Thyroid gland (tissue), 4 donors: ENCODE measurements at regions of chr3 and their contacts with region 1.

Region 1: GRCh38 chr3:24237971-24238767 is 256.5 kb downstream of the THRB start:
- DNase-seq: peak; percentile 27 to 36
- H3K4me3 ChIP-seq: no peak overlapping the region
- H3K27ac ChIP-seq: no peak overlapping the region
- H3K4me1 ChIP-seq: no peaks in the 10 kb centered on the region
- H3K27me3 ChIP-seq: no peaks in the 10 kb centered on the region
- CTCF ChIP-seq: peak in 5 of 6 experiments; percentile 7 to 82 (median 77)
- POLR2A ChIP-seq: no peak

Region 2: GRCh38 chr3:24004171-24004938 is 233.8 kb before region 1 on chr3:
- intact Hi-C with region 1: loop called (anchors 5 kb)
- DNase-seq: no peak
- H3K4me3 ChIP-seq: no peak overlapping the region
- H3K27ac ChIP-seq: no peak overlapping the region
- H3K4me1 ChIP-seq: no peaks in the 10 kb centered on the region
- H3K27me3 ChIP-seq: no peaks in the 10 kb centered on the region
- CTCF ChIP-seq: no peak
- POLR2A ChIP-seq: no peak